ENCODE measurements at regions of chr2 and their contacts with region 1.

Region 1: DNA sequence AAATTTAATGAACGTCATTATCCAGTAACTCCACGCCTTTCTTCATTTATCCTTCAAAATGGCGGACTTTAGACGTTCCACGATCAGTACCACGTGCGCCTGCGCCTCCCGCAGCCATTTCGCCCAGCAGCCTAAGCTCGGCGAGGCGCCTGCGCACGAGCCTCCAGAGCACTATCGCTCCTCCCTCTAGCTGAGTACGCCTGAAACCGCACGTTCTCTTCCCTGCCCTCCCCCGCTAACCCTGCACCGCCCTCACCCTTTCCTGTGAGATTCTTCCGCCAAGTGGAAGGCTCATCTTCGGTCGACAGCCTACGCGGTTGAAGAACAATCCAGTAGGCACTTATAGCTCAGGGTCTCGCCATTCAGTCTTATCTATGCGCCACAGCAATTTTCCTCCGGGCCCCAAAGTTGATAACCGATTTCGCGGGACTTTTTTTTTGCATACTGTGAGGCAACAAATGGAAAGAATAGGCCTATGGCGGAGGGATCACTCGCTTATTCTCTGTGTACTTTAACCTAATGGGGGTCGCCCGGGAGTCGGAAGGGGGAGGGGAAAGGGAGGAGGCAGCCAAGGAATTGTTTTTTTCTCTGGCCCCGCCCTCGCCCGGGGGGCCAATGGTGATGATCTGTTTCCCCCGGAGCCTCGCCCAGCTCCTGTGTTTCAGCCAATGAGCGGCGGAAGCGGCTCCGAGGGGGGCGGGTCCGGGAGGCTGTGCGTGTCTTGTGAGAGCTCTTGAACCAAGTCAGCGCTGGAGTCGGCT is at the start of gene KDM3A:
- DNase-seq: peak; percentile 98 to 100 (median 99)
- ATAC-seq: peak; percentile 82 to 86 (median 84)
- H3K4me3 ChIP-seq: peak within 1 kb of the TSS; percentile 93 to 97
- H3K4me3 Mint-ChIP-seq: peak within 1 kb of the TSS; percentile 98
- H3K27ac ChIP-seq: peak within 1 kb of the TSS; percentile 87
- H3K27ac Mint-ChIP-seq: peak within 1 kb of the TSS; percentile 99
- H3K4me1 ChIP-seq: peaks cover 26 to 27% of the 10 kb centered on the region in 2 experiments
- H3K4me1 Mint-ChIP-seq: peaks cover 43 to 48% (median 48%) of the 10 kb centered on the region in 3 donors
- H3K27me3 ChIP-seq: peaks cover 0 to 3% of the 10 kb centered on the region in 2 experiments
- H3K27me3 Mint-ChIP-seq: no peaks in the 10 kb centered on the region
- total RNA-seq, gene KDM3A: 140 to 168 (median 145) TPM

Region 2: DNA sequence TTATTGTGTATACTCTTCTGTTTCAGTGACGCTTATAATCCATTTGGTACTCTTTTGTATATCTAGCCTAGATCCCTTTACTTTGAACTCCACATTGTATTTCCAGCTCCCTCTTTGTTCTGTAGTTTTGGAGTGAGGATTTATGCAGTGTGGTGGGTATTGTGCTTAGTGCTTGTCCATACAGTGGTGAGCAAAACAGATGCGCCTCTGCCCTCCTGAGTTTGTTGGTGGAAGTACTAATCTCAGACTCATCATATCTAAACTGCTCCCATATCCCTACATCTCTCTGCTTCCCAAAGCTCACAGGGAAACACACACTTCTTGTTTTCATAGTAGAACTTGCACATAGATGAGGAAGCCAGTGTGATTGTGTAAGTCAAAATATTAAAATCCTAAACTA is 322.7 kb before region 1 on chr2:
- CTCF ChIA-PET with region 1: no interaction called
- POLR2A ChIA-PET with region 1: interaction called in 1 of 2 experiments, 17 read pairs
- DNase-seq: no peak
- ATAC-seq: no peak
- H3K4me3 ChIP-seq: no peak overlapping the region
- H3K4me3 Mint-ChIP-seq: no peak overlapping the region
- H3K27ac ChIP-seq: no peak overlapping the region
- H3K27ac Mint-ChIP-seq: no peak overlapping the region
- H3K4me1 ChIP-seq: no peaks in the 10 kb centered on the region
- H3K4me1 Mint-ChIP-seq: peaks cover 0 to 9% (median 5%) of the 10 kb centered on the region in 3 donors
- H3K27me3 ChIP-seq: no peaks in the 10 kb centered on the region
- H3K27me3 Mint-ChIP-seq: no peaks in the 10 kb centered on the region

Region 3: GRCh38 chr2:86453836-86454235 is 13.0 kb after region 1 on chr2:
- CTCF ChIA-PET with region 1: interaction called in 1 of 2 experiments, 7 read pairs
- POLR2A ChIA-PET with region 1: interaction called, 8 to 11 read pairs
- DNase-seq: no peak
- ATAC-seq: no peak
- H3K4me3 ChIP-seq: no peak overlapping the region
- H3K4me3 Mint-ChIP-seq: no peak overlapping the region
- H3K27ac ChIP-seq: no peak overlapping the region
- H3K27ac Mint-ChIP-seq: no peak overlapping the region
- H3K4me1 ChIP-seq: peaks cover 0 to 2% of the 10 kb centered on the region in 2 experiments
- H3K4me1 Mint-ChIP-seq: peaks cover 25 to 46% (median 41%) of the 10 kb centered on the region in 3 donors
- H3K27me3 ChIP-seq: no peaks in the 10 kb centered on the region
- H3K27me3 Mint-ChIP-seq: no peaks in the 10 kb centered on the region

Region 4: GRCh38 chr2:86468162-86469033 is 27.6 kb after region 1 on chr2:
- CTCF ChIA-PET with region 1: interaction called in 1 of 2 experiments, 3 read pairs
- POLR2A ChIA-PET with region 1: interaction called, 10 to 18 read pairs
- DNase-seq: peak in 7 of 35 experiments; percentile 1 to 28 (median 13)
- ATAC-seq: peak; percentile 77 to 84 (median 82)
- H3K4me3 ChIP-seq: no peak overlapping the region
- H3K4me3 Mint-ChIP-seq: peak overlapping the region; percentile 42 to 65 (median 63)
- H3K27ac ChIP-seq: peak overlapping the region; percentile 49
- H3K27ac Mint-ChIP-seq: peak overlapping the region; percentile 83 to 91
- H3K4me1 ChIP-seq: peaks cover 5 to 6% of the 10 kb centered on the region in 2 experiments
- H3K4me1 Mint-ChIP-seq: peaks cover 70 to 77% (median 70%) of the 10 kb centered on the region in 3 donors
- H3K27me3 ChIP-seq: no peaks in the 10 kb centered on the region
- H3K27me3 Mint-ChIP-seq: no peaks in the 10 kb centered on the region

Region 5: DNA sequence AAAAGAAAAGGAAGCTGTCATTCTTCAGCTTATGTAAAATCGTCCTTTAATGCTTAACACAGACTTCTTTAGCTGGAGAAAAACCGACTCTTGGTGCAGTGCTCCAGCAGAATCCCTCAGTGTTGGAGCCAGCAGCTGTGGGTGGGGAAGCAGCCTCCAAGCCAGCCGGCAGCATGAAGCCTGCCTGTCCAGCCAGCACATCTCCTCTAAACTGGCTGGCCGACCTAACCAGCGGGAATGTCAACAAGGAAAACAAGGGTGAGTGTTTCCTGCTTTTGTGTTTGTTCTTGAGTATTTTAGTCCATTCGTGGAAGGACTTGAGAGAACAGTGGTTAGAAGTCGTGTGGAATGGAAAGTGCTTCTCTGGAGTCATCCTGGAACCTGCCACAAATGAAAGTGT is 39.3 kb after region 1 on chr2:
- CTCF ChIA-PET with region 1: no interaction called
- POLR2A ChIA-PET with region 1: no interaction called
- DNase-seq: no peak
- ATAC-seq: no peak
- H3K4me3 ChIP-seq: no peak overlapping the region
- H3K4me3 Mint-ChIP-seq: no peak overlapping the region
- H3K27ac ChIP-seq: no peak overlapping the region
- H3K27ac Mint-ChIP-seq: no peak overlapping the region
- H3K4me1 ChIP-seq: no peaks in the 10 kb centered on the region
- H3K4me1 Mint-ChIP-seq: peaks cover 13 to 25% (median 24%) of the 10 kb centered on the region in 3 donors
- H3K27me3 ChIP-seq: no peaks in the 10 kb centered on the region
- H3K27me3 Mint-ChIP-seq: no peaks in the 10 kb centered on the region

Measured in T-cell (primary cell).